ENCODE measurements at regions of chr11 and their contacts with region 1.

Region 1: DNA sequence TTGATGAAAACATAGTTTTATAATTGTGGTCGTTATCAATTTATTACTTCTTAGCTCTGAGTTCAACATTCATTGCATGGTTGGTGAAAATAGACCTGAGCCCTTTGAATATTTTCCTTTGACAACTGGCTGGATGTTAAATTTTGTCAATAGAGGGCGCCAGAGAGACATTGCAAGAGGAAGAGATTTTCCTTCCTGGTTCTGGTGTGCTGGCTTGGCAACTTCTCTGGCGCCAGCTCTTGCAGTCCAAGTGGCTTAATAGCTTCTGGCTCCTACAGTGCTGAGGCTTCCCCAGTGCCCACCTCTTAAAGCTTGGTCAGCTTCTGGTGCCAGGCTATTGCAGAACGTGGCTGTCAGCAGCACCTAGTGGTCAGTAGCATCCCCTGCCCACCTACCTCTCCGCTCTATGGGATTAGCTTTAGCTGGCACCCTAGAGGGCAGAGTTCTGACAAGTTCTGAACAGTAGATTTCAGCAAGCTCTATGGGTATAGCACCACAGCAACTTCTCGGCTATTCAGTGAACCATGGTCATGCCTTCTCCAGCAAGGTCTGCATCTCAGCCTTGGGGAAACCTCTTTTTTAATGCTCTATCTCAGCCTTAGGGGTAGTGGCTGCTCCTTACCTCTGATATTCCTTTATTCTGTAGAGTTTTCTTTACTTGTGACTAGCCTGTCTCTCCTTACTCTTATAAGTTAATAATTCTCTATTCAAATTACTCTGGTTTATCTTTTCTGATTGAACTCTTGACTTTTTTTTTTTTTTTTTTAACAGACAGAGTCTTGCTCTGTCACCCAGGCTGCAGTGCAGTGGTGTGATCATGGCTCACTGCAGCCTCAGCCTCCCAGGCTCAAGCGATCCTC is 59.4 kb downstream of the ACER3 start:
- DNase-seq: peak; percentile 79
- ATAC-seq: peak; percentile 85
- H3K4me3 ChIP-seq: no peak overlapping the region
- H3K27ac ChIP-seq: no peak overlapping the region
- H3K4me1 ChIP-seq: peaks cover 13% of the 10 kb centered on the region
- H3K27me3 ChIP-seq: no peaks in the 10 kb centered on the region
- CTCF ChIP-seq: peak; percentile 84
- EP300 ChIP-seq: no peak
- POLR2A ChIP-seq: no peak
- RAD21 ChIP-seq: peak; percentile 67

Region 2: DNA sequence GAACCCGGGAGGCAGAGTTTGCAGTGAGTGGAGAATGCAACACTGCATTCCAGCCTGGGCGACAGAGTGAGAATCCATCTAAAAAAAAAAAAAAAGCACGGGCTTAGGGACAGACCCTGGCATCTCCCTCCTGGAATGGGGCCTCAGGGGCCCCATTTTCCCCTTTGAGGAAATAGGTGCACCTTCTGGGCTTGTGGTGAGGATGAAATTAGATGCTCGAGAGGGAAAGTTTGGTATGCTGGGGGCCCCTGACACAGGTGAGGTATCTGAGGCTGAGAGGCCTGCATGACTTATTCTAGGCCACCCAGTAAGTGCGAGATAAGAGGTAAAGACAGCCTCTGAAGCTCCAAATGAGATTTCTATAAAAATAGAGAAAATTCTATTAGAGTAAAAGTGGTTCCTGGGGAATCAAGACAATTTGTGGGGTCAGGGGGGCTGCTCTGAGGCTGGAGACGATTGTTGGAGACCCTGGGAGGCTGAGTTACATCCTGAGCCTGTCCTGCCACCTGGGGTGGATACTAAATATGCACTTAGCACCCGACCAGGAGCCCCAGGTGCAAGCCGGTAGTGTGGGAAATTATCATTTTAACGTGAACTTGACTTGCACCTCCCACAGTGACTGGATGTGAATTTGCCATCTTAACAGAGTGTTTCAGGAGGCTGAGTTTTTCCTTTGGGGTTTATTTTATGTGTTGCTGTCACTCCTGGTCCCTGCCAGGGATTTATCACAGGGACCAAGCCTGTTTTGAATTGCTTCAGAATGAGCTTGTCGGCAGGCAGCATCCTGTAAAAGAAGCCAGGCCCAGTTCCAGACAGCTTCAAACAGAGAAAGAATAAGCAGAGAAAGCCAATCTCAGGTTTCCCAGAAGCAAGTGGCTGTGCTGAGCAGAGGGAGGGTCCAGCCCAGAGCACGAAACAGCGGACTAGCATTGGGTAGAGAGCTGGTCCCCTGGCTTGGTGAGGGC is 185.4 kb before region 1 on chr11:
- CTCF ChIA-PET with region 1: interaction called, 28 read pairs
- POLR2A ChIA-PET with region 1: no interaction called
- in situ Hi-C with region 1: loop called (anchors 5 kb)
- intact Hi-C with region 1: loop called (anchors 1 kb)
- DNase-seq: no peak
- ATAC-seq: no peak
- H3K4me3 ChIP-seq: peak overlapping the region in 1 of 3 experiments; percentile 9; a peak in 1 of 6 replicates
- H3K27ac ChIP-seq: no peak overlapping the region
- H3K4me1 ChIP-seq: peaks cover 22% of the 10 kb centered on the region
- H3K27me3 ChIP-seq: peaks cover 4 to 27% of the 10 kb centered on the region in 2 experiments; a peak in 2 of 5 replicates
- CTCF ChIP-seq: no peak
- EP300 ChIP-seq: no peak
- POLR2A ChIP-seq: no peak
- RAD21 ChIP-seq: no peak

Region 3: DNA sequence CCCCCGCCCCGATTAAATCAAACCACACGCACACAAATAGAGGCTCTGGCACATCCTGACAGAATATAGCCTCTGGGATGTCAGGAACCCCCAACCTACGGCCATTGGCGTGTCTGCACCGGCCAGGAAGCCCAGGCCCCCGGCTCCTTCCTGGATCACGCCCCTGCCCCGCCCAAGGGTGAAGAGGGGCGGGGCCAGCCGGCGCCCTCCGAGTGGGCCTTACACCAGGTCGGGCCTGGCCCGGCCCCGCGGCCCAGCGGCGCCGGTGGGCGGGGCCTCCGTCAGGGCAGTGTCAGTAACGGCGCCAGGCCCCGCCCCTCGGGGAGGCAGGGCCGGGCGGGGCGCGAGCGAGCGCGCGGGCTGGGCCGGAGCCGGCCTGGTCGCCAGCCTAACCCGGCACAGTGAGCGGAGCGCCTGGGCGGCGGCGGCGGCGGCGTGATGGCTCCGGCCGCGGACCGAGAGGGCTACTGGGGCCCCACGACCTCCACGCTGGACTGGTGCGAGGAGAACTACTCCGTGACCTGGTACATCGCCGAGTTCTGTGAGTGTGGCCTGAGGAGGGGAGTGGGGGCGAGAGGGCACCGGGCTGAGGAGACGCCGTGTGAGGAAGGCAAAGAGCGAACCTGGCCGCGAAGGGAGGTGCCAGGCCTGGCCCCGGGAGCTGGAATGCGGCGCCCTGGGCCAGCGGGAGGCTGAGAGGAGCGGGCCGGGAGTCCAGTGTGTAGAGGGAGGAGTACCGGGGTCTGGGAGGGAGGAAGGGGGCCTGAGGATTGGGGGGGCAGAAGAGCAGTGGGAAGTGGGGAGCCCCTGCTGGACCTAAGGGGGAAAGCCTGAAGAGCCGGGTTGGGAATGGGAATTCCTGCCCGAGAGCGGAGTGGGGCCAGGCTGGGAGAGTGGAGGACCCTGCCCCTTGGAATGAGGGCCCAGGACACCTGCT is 59.3 kb before region 1 on chr11 and contains the start of gene ACER3:
- CTCF ChIA-PET with region 1: no interaction called
- POLR2A ChIA-PET with region 1: no interaction called
- in situ Hi-C with region 1: no loop called
- intact Hi-C with region 1: loop called (anchors 2 kb)
- DNase-seq: peak; percentile 78
- ATAC-seq: peak; percentile 98
- H3K4me3 ChIP-seq: peak within 1 kb of the TSS; percentile 75 to 97 (median 96)
- H3K27ac ChIP-seq: peak within 1 kb of the TSS; percentile 66
- H3K4me1 ChIP-seq: peaks cover 18% of the 10 kb centered on the region
- H3K27me3 ChIP-seq: no peaks in the 10 kb centered on the region
- CTCF ChIP-seq: peak; percentile 18; the same call in 1 of the 2 replicates
- EP300 ChIP-seq: 0 out of 4 replicates have a peak, but pooled peaks of 1 of the 2 experiments have one; percentile 4
- POLR2A ChIP-seq: peak; percentile 28 to 76; a peak in 2 of 4 replicates
- RAD21 ChIP-seq: peak; percentile 31; the same call in 1 of the 2 replicates
- total RNA-seq, gene ACER3: 8.4 and 9.8 TPM in 2 replicates

Region 4: DNA sequence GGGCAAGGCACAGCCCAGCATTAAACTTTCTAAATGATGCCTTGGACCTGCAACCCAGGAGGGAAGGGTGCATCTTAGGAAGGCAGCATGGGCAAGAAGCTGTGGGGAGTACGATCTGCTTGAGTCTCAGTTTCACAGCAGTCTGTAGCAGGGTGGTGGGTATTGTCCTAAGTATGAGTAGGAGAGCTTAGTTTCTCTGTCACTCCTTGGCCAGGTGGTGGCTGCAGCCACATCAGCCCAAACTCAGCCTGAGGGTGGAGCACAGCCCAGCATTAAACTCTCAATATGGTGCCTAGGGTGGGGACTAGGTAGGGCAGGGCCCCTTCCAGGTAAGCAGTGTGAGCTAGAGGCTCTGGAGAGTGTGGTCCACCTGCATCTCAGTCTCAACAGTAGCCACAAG is 26.1 kb after region 1 on chr11:
- CTCF ChIA-PET with region 1: no interaction called
- POLR2A ChIA-PET with region 1: no interaction called
- in situ Hi-C with region 1: no loop called
- intact Hi-C with region 1: no loop called
- DNase-seq: no peak
- ATAC-seq: no peak
- H3K4me3 ChIP-seq: no peak overlapping the region
- H3K27ac ChIP-seq: no peak overlapping the region
- H3K4me1 ChIP-seq: no peaks in the 10 kb centered on the region
- H3K27me3 ChIP-seq: no peaks in the 10 kb centered on the region
- CTCF ChIP-seq: no peak
- EP300 ChIP-seq: no peak
- POLR2A ChIP-seq: no peak
- RAD21 ChIP-seq: no peak

Region 5: GRCh38 chr11:77039491-77040400 is 119.6 kb after region 1 on chr11:
- CTCF ChIA-PET with region 1: interaction called, 40 read pairs
- POLR2A ChIA-PET with region 1: no interaction called
- in situ Hi-C with region 1: loop called (anchors 25 kb)
- intact Hi-C with region 1: loop called (anchors 2 kb)
- DNase-seq: no peak
- ATAC-seq: no peak
- H3K4me3 ChIP-seq: no peak overlapping the region
- H3K27ac ChIP-seq: no peak overlapping the region
- H3K4me1 ChIP-seq: peaks cover 37% of the 10 kb centered on the region
- H3K27me3 ChIP-seq: peaks cover 7 to 70% of the 10 kb centered on the region in 2 experiments
- CTCF ChIP-seq: peak; percentile 63
- EP300 ChIP-seq: no peak
- POLR2A ChIP-seq: no peak
- RAD21 ChIP-seq: 0 out of 2 replicates have a peak, but pooled peaks have one; percentile 38

Region 6: DNA sequence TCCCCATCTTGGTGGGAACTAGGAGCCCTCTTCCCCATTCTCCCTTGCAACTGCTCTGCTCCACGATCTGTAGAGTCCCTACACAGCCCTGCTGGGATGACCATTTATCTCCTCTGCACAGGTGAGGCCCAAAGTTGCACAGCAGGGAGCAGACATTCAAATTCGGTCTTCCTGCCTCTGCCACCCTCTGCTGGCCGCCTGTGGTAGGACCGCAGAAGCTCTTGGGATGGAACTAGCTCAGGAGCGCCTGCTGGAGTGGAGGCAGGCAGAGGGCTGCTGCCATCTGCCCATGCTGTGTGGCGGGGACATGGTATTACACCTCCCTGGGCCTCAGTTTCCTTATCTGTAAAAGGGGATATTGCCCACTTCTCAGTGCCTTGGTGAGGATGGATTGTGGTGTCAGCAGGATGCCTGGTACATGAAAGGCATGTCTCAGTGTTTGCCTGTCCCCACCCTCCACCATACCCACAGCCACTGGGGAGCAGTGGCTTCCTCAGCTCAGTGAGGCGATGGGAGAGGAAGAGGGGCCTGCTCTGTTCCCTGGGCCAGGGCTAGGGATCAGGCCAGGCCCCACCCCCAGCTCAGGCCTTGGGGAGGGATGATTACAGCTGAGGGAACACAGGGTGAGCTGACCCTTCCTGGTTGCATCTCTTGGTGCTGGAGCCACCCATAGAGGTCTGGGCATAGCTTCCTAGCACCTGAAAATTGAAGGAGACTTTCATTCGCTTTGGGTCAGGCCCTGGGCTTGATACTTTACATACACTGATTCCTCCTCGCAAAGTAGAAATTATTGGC is 171.2 kb after region 1 on chr11:
- CTCF ChIA-PET with region 1: interaction called, 9 read pairs
- POLR2A ChIA-PET with region 1: no interaction called
- in situ Hi-C with region 1: loop called (anchors 5 kb)
- intact Hi-C with region 1: no loop called
- DNase-seq: peak; percentile 60
- ATAC-seq: peak; percentile 62
- H3K4me3 ChIP-seq: no peak overlapping the region
- H3K27ac ChIP-seq: no peak overlapping the region
- H3K4me1 ChIP-seq: peaks cover 38% of the 10 kb centered on the region
- H3K27me3 ChIP-seq: no peaks in the 10 kb centered on the region; a peak in 1 of 5 replicates
- CTCF ChIP-seq: peak; percentile 97
- EP300 ChIP-seq: no peak
- POLR2A ChIP-seq: no peak
- RAD21 ChIP-seq: peak; percentile 94

Region 7: DNA sequence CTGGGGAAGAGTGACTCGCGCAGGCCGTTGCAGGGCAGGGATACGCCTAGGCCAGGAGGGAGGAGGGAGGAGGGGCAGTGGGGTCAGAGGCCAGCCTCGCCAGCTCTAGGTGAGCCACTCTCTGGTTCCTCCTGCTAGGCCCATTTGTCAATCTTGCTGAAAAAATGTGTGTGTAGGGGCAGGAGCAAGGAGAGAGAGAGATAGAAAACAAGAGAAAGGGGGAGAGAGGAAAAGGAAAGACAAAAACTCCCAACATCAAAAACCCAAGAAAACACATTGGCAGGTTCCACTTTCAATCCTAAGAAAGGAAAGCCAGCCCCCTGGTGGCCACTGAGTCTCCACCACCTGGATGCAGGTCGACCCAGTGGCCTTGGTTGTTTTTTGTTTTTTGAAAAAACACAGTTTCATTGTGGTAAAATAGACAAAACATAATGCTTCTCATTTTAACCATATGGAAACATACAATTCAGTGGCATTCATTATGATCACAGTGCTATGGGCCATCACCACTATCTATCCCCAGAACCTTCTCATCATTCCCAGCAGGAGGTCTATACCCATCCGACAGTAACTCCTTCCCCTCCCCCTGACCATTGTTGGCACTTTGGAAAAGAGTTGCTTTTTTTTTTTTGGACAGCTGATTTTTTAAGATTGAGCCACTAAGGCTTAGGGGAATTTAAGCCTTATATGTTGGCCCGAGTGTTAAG is 193.4 kb after region 1 on chr11:
- CTCF ChIA-PET with region 1: no interaction called
- POLR2A ChIA-PET with region 1: no interaction called
- in situ Hi-C with region 1: no loop called
- intact Hi-C with region 1: no loop called
- DNase-seq: no peak
- ATAC-seq: peak; percentile 63
- H3K4me3 ChIP-seq: peak overlapping the region in 1 of 3 experiments; percentile 31; a peak in 1 of 6 replicates
- H3K27ac ChIP-seq: no peak overlapping the region
- H3K4me1 ChIP-seq: peaks cover 14% of the 10 kb centered on the region
- H3K27me3 ChIP-seq: peaks cover 0 to 4% of the 10 kb centered on the region in 2 experiments; a peak in 1 of 5 replicates
- CTCF ChIP-seq: peak; percentile 66
- EP300 ChIP-seq: no peak
- POLR2A ChIP-seq: no peak
- RAD21 ChIP-seq: no peak

Measured in HepG2 (cell line).